Activated T-helper 1 cell treated with anti-CD3 and anti-CD28 coated beads, Interleukin-12 subunit alpha, Interleukin-12 subunit beta, Interleukin-2, Interleukin-4 antibody, amounts not matched to agents 30 ng/mL and 10 ng/mL and 1 ng/mL, durations not matched to agents 14 hours and 24 hours and 36 hours (primary cell): ENCODE measurements at regions of chr16 and their contacts with region 1.

Region 1: DNA sequence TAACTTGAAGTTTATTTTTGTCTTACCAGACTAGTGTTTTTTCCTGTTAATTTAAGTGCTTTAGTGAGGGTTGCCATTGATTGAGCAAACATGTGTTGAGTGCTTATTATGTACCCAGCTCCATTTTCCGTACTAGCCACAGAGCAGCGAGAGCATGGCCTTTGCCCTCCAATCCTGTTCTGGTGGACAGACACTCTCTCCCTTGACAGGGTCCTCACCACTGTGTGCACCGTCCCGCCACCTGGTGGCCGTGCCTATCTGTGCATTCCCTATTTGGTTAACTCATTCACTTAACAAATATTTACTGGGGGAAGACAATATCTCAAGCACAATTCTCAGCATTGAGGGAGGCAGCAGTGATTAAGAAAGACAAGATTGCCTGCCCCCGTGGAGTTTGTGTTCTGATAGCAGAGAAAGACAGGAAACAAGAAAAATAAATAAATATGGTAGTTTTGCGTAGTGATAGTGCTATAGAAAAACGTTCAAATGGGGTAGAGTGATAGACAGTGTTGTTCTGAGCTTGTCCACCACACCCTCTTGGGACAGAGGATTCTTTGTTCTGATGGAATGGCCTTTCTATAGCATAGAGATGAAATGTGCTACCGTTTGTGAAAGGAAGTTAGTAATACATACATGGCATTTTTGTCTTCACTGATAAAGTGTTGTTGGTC is 13.0 kb downstream of the CDH13 start:
- DNase-seq: peak; percentile 37
- H3K4me3 Mint-ChIP-seq: no peak overlapping the region
- H3K27ac Mint-ChIP-seq: no peak overlapping the region
- H3K4me1 Mint-ChIP-seq: peaks cover 40% of the 10 kb centered on the region
- H3K27me3 Mint-ChIP-seq: no peaks in the 10 kb centered on the region

Region 2: DNA sequence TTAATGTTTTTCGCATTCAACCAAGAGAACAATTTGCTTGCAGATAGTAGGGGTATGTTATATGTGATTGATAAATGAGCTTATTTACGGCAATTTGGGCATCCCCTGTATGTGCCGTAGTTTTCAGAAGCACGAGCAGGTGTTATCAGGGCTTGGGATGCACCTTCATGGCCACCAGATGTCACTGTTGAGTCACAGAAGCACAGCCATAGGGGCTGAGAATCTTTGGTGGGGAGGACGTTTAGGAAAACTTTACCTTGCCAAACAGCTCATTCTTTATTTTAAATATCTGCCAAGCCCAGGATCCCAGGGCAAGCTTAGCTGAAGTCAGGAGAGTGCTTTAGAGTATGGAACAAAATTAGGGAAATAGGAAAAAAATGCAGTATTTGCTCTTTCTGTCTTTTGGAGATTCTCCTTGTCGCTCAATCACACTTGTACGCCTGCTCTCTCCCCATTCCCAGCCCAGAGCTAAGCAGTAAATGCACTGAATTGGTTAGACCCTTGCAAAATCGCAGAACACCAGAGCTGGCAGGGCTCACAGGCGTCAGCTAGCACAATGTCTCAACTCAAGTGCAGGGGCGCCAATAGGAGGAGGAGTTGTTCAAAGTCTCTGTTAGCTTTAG is 376.2 kb before region 1 on chr16:
- intact Hi-C with region 1: loop called (anchors 5 kb)
- DNase-seq: peak; percentile 19
- H3K4me3 Mint-ChIP-seq: no peak overlapping the region
- H3K27ac Mint-ChIP-seq: no peak overlapping the region
- H3K4me1 Mint-ChIP-seq: no peaks in the 10 kb centered on the region
- H3K27me3 Mint-ChIP-seq: peaks cover 7% of the 10 kb centered on the region

Region 3: DNA sequence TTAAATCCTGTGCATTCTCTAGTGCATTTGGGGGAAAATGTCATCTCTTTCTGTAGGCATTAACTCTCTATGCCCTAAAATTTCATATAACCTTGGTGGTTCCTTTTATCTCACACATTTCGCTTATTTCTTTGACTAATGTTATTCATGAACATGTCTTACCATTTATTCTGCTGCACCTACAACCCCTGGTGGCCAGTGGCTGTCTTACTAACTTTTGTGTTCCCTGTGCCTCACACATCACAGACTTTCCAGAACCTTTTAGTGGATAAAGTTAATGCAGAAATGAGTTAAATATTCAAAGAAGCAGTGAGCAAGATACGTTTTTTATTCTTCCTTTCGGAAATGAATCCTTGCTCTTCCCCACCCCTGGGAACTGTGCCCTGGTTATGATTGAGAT is 98.9 kb after region 1 on chr16:
- intact Hi-C with region 1: loop called (anchors 5 kb)
- DNase-seq: no peak
- H3K4me3 Mint-ChIP-seq: no peak overlapping the region
- H3K27ac Mint-ChIP-seq: no peak overlapping the region
- H3K4me1 Mint-ChIP-seq: no peaks in the 10 kb centered on the region
- H3K27me3 Mint-ChIP-seq: peaks cover 22% of the 10 kb centered on the region